Colonic mucosa (tissue), 4 donors: ENCODE measurements at regions of chr1 and their contacts with region 1.

Region 1: GRCh38 chr1:94237291-94238226 is at the start of gene ARHGAP29:
- DNase-seq: peak; percentile 85
- H3K4me3 ChIP-seq: peak within 1 kb of the TSS; percentile 86
- H3K27ac ChIP-seq: peak within 1 kb of the TSS; percentile 61
- H3K4me1 ChIP-seq: peaks cover 4% of the 10 kb centered on the region
- H3K27me3 ChIP-seq: peaks cover 26% of the 10 kb centered on the region
- CTCF ChIP-seq: no peak
- total RNA-seq, gene ARHGAP29: 2.5 to 8.6 TPM

Region 2: DNA sequence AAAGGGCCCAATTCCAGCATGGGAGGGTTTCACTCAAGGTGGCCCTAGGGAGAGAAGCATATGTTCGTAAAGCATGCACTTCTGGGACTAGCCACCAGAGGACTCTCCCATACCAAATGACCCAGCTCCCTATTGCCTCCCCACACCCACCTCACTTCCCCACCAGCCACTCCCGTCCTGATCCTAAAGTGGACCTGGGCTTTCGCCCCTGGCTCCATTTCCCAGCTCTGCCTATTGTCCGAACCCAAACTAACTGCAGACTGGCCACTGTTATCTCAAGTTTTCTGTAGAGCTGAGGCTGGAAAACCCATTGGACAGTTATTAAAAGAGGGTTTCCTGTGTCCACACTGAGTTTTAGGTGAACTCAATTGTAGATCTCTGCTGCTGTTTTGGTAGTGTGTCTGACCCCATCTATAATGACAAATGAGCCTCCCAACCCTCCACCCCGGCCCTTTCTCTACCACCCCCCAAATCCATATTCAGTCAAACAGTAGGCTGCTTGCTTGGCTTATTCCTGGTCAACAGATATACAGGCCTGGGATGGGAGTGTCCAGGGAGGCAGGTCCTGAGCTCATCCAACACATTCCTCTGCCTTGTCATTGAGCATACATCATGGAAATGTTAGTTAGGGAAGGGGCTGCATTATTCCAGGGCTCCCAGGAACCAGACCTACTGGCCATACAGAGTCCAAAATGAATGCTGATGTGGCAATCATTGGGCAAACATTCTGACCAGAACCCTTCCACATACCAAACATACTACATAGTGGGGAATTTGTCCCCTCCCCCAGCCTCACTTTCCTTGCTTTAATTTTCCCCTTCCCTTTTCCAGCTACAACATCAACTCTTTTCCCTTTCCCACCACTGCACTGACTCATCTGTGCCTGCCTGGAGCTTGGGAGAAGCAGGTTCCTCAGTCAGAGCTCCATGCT is 175.8 kb before region 1 on chr1:
- intact Hi-C with region 1: loop called (anchors 5 kb)
- DNase-seq: peak; percentile 75
- H3K4me3 ChIP-seq: no peak overlapping the region
- H3K27ac ChIP-seq: no peak overlapping the region
- H3K4me1 ChIP-seq: no peaks in the 10 kb centered on the region
- H3K27me3 ChIP-seq: no peaks in the 10 kb centered on the region
- CTCF ChIP-seq: peak; percentile 73

Region 3: DNA sequence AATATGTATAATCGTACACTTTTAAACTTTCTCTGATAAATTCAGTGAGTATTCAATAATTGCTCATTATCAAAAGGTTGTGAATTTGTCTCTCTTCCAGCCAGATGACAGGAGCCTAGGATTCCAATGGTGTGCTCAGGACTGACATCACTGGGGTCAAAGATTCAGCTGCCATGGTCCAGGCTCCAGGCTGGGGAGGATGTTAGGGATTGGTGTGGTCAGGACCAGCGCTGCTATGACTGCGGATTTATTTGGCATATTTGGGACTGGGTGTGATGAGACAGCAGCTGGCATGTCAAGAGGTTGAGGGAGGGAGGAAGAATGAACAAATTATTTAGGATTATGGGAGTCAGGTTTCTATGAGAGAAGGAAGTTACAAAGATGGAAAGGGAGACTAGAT is 68.4 kb before region 1 on chr1:
- intact Hi-C with region 1: no loop called
- DNase-seq: no peak
- H3K4me3 ChIP-seq: no peak overlapping the region
- H3K27ac ChIP-seq: no peak overlapping the region
- H3K4me1 ChIP-seq: no peaks in the 10 kb centered on the region
- H3K27me3 ChIP-seq: no peaks in the 10 kb centered on the region
- CTCF ChIP-seq: no peak

Region 4: GRCh38 chr1:94299627-94300552 is 62.3 kb after region 1 on chr1:
- intact Hi-C with region 1: no loop called
- DNase-seq: no peak
- H3K4me3 ChIP-seq: no peak overlapping the region
- H3K27ac ChIP-seq: no peak overlapping the region
- H3K4me1 ChIP-seq: no peaks in the 10 kb centered on the region
- H3K27me3 ChIP-seq: no peaks in the 10 kb centered on the region
- CTCF ChIP-seq: no peak

Region 5: DNA sequence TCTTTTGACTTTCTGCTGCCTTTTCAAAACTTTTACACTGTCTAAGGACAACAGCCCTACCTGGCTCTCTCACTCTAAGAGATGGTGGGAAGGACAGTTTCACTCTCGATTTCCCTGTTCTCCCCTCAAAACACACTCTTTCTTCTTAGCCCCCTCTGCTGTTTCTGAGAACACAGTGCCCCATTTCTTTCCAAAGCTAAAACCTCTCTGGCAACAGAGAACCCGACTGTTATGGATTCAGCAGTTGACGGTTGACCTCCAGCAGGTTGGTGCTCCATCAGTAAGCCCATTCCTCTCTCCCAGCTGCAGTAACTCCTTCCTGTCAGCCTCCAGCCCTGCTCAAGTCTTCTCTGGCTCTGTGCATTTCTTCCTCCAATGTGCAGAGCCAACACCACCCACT is 92.4 kb after region 1 on chr1:
- intact Hi-C with region 1: loop called (anchors 5 kb)
- DNase-seq: no peak
- H3K4me3 ChIP-seq: no peak overlapping the region
- H3K27ac ChIP-seq: no peak overlapping the region
- H3K4me1 ChIP-seq: no peaks in the 10 kb centered on the region
- H3K27me3 ChIP-seq: no peaks in the 10 kb centered on the region
- CTCF ChIP-seq: no peak

Region 6: DNA sequence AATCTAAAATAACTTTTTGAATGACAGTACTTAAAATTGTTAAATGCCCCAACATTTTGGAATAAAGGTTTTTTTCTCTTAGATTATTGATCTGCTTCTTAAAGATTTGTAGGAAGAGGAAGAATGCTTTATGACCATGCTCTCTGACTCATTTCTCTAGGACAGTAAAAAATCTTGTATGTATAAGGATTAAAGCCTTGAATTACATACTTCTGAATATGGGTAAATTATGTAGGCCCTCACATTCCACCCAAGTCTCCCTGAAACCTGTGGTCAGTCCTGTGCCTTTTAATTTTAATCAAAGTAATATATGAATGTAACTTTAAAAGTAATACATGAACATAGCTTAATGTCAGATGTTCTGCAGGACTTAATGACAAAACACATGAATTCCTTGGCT is 231.1 kb after region 1 on chr1:
- intact Hi-C with region 1: no loop called
- DNase-seq: no peak
- H3K4me3 ChIP-seq: no peak overlapping the region
- H3K27ac ChIP-seq: no peak overlapping the region
- H3K4me1 ChIP-seq: no peaks in the 10 kb centered on the region
- H3K27me3 ChIP-seq: no peaks in the 10 kb centered on the region
- CTCF ChIP-seq: no peak